Breast epithelium (tissue), 4 donors: ENCODE measurements at regions of chr4 and their contacts with region 1.

Region 1: DNA sequence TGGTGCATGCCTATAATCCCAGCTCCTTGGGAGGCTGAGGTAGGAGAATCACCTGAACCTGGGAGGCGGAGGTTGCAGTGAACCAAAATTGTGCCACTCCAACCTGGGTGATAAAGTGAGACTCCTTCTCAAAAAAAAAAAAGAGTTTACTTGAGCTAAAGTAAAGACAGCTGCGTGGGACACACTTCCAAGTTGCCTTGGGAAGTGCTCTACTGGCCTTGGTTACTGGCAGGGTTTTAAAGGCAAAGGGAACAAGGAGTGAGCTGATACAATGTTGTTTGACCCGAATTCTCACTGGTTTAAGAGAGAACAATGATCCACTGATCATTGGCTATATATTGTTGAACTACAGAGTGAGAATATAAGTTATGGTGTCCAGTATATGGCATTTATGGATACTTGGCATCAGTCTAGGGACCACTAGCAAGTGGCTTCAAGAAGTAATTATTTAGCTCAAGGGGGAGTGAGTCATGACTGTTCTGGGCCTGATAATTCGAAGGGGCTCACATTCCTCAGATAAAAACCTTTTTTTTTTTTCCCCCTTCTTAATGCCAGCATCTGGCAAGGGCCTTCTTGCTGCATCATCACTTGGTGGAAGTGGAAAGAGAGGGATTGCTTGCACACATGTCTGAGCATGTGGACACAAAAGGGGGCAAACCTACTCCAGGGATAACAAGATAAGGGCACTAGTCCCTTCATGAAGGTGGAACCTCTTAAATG is 32.3 kb downstream of the GRK4 start:
- DNase-seq: no peak
- H3K4me3 ChIP-seq: no peak overlapping the region
- H3K27ac ChIP-seq: no peak overlapping the region
- H3K4me1 ChIP-seq: no peaks in the 10 kb centered on the region
- H3K27me3 ChIP-seq: no peaks in the 10 kb centered on the region
- CTCF ChIP-seq: no peak
- POLR2A ChIP-seq: no peak

Region 2: GRCh38 chr4:2963175-2963965 is 32.3 kb before region 1 on chr4 and contains the starts of genes GRK4 and NOP14:
- intact Hi-C with region 1: no loop called
- DNase-seq: peak; percentile 96 to 97
- H3K4me3 ChIP-seq: peak within 1 kb of the TSS; percentile 93 to 96 (median 93)
- H3K27ac ChIP-seq: peak within 1 kb of the TSS; percentile 80 to 85
- H3K4me1 ChIP-seq: peaks cover 6 to 9% of the 10 kb centered on the region in 2 donors
- H3K27me3 ChIP-seq: no peaks in the 10 kb centered on the region
- CTCF ChIP-seq: no peak
- POLR2A ChIP-seq: no peak
- total RNA-seq, gene GRK4: 3.8 to 6.9 (median 5.8) TPM
- total RNA-seq, gene NOP14: 21.2 to 33.1 (median 23.4) TPM

Region 3: DNA sequence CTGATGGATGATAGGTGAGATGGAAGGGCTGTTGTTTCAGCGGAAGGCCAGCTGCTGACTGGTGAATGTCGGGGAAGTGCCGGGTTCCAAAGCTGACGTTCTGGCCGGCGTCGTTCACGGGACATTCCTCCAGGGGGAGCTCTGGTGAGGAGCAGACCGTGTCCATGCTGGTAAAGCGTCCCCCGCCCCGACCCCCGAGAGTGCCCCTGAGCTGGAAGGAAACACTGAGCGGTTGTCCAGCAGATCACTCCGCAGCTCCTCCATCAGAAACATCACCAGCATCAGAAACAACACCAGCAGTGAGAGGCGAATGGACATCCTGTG is 751.8 kb after region 1 on chr4:
- intact Hi-C with region 1: loop called (anchors 5 kb)
- DNase-seq: no peak
- H3K4me3 ChIP-seq: no peak overlapping the region
- H3K27ac ChIP-seq: no peak overlapping the region
- H3K4me1 ChIP-seq: no peaks in the 10 kb centered on the region
- H3K27me3 ChIP-seq: peaks cover 6 to 79% of the 10 kb centered on the region in 2 donors
- CTCF ChIP-seq: no peak
- POLR2A ChIP-seq: no peak